SK-N-SH (cell line): ENCODE measurements at regions of chr1 and their contacts with region 1.

Region 1: DNA sequence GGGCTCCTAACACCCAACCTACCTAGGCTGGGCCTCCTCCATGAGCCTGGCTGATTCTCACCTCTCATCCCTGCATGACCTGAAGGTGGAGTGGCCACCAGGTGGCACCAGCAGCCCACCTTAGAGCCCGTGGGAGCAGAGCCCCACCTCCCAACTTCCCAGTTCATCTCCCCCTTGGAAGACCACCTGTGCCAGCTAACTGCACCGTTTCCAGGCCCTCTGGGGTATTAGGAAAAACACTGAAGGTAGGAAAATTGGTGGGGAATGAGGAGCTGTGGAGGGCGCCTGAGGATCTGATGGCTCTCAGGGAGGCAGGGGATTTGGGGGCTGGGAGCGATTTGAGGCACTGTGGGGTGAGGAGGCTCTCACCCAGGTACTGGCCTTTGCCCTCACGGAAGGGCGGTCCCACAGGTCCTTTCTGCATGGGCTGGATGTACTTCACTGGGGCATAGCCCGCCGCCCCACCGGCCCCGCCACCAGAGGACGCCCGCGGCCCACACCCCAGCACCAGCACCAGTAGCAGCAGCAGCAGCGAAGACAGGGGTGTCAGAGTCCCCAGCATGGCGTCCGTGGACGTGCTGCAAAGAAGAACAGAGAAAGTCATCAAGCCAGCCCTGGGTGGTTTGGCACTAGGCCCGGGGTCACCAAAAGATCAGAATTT is 11.1 kb downstream of the ADPRS start:
- DNase-seq: peak; percentile 95
- H3K4me3 ChIP-seq: peak overlapping the region in 1 of 2 experiments; percentile 4; a peak in 1 of 4 replicates
- H3K27ac ChIP-seq: peak overlapping the region in 1 of 2 experiments; percentile 16; a peak in 1 of 4 replicates
- H3K4me1 ChIP-seq: peaks cover 0 to 39% of the 10 kb centered on the region in 2 experiments; a peak in 2 of 4 replicates
- H3K27me3 ChIP-seq: no peaks in the 10 kb centered on the region
- CTCF ChIP-seq: peak; percentile 90
- EP300 ChIP-seq: no peak
- RAD21 ChIP-seq: peak; percentile 97

Region 2: GRCh38 chr1:36008546-36009197 is 91.1 kb before region 1 on chr1:
- CTCF ChIA-PET with region 1: no interaction called
- POLR2A ChIA-PET with region 1: no interaction called
- DNase-seq: no peak
- H3K4me3 ChIP-seq: no peak overlapping the region
- H3K27ac ChIP-seq: peak overlapping the region; percentile 64 to 78
- H3K4me1 ChIP-seq: peaks cover 0 to 14% of the 10 kb centered on the region in 2 experiments; a peak in 2 of 4 replicates
- H3K27me3 ChIP-seq: no peaks in the 10 kb centered on the region
- CTCF ChIP-seq: no peak
- EP300 ChIP-seq: 0 out of 4 replicates have a peak, but pooled peaks of 1 of the 2 experiments have one; percentile 16
- RAD21 ChIP-seq: no peak

Region 3: DNA sequence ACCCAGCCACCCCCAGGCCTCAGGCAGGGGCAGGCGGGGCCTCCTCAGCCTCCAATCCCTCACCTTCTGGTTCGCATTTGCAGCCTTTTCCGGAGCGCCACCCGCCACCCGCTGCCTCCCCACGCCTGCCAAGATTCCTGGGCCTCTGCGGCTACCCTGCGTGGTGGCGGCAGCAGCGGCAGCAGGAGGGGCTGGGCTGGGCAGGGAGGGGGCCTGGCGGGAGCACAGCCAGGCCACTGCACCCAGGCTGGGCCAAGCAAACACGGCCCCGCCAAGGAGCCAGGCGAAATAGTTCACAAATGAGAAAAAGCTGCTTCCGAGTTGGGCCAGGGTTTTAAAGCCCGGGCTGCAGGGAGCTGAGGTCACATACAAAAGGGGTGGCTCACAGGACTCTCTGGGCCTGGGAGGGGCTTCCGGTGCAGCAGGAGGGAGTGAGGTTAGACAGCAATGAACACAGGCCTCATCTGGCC is 15.4 kb after region 1 on chr1:
- CTCF ChIA-PET with region 1: interaction called, 47 read pairs
- POLR2A ChIA-PET with region 1: no interaction called
- DNase-seq: peak; percentile 88
- H3K4me3 ChIP-seq: no peak overlapping the region
- H3K27ac ChIP-seq: peak overlapping the region; percentile 54 to 59
- H3K4me1 ChIP-seq: peaks cover 10 to 28% of the 10 kb centered on the region in 2 experiments; a peak in 2 of 4 replicates
- H3K27me3 ChIP-seq: no peaks in the 10 kb centered on the region
- CTCF ChIP-seq: no peak
- EP300 ChIP-seq: peak in 1 of 2 experiments; percentile 26; a peak in 1 of 4 replicates
- RAD21 ChIP-seq: no peak